ENCODE measurements at regions of chr5 and their contacts with region 1.

Region 1: DNA sequence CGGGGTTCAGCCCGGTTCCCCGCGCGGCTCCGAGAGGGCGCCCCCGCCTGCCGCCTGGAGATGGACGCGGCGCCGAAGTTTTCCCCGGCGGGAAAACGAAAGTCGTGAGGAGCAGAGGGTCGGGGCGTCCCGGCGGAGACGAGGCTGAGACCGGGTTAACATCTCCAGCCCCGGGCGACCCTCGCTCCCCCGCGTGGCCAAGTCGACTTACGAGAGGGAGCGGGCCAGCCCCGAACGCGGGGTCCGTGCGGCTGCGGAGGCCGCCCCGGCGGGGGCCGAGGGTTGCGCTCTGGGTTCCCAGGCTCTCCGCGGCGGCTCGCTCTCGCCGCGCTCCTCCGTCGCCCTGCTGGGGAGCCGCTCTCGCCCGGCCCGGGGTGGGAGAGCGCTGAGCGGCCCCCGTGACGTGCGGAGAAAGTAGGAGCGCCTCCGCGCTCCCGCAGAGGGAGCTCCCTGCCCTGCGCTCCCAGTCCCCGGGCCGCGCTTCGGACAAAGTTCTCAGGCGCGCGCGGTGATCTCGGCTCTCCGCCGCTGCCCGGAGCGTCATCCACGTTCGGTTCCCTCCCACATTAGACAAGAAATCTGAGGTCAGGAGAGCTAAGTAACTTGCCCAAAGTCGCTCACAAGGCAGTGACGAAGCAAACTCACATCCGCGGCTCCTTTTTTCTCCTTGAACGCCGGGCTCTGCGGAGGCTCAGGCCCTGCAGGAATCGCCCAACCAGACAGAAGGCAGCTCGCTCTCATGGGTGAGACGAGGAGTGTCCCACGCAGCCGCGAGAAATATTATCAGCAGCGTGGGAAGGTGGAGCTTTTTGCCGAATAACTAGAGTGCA is 1.2 kb upstream of the GCNT4 start:
- DNase-seq: peak; percentile 43 to 83 (median 59)
- ATAC-seq: peak; percentile 45
- H3K4me3 ChIP-seq: peak overlapping the region; percentile 68
- H3K4me3 Mint-ChIP-seq: peak overlapping the region; percentile 95
- H3K27ac ChIP-seq: peak overlapping the region; percentile 69 to 89
- H3K27ac Mint-ChIP-seq: peak overlapping the region; percentile 94
- H3K4me1 ChIP-seq: peaks cover 75% of the 10 kb centered on the region
- H3K4me1 Mint-ChIP-seq: peaks cover 85% of the 10 kb centered on the region
- H3K27me3 ChIP-seq: no peaks in the 10 kb centered on the region
- H3K27me3 Mint-ChIP-seq: no peaks in the 10 kb centered on the region
- CTCF ChIP-seq: no peak

Region 2: DNA sequence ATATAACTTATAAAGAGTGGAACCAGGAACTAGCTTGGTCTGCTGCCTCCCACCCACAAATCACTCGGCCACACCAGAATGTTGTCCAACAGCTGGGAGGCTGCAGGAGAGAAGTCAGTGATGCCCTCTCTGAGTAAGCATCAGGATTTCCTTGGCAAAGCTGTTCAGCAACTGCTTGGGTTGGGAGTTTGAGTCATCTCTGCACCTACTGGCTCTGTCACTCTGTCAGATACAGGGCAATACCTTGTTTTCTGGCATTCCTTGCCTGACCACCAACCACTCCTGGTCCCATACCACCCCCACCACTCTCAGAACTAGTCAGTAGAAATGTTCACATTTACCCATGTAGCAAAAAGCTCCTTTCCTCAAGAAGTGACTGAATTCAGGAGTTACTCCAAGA is 35.6 kb after region 1 on chr5:
- CTCF ChIA-PET with region 1: interaction called, 5 read pairs
- POLR2A ChIA-PET with region 1: interaction called, 4 read pairs
- intact Hi-C with region 1: loop called (anchors 5 kb)
- DNase-seq: no peak
- ATAC-seq: no peak
- H3K4me3 ChIP-seq: no peak overlapping the region
- H3K4me3 Mint-ChIP-seq: no peak overlapping the region
- H3K27ac ChIP-seq: no peak overlapping the region
- H3K27ac Mint-ChIP-seq: no peak overlapping the region
- H3K4me1 ChIP-seq: peaks cover 7% of the 10 kb centered on the region
- H3K4me1 Mint-ChIP-seq: peaks cover 44% of the 10 kb centered on the region
- H3K27me3 ChIP-seq: no peaks in the 10 kb centered on the region
- H3K27me3 Mint-ChIP-seq: no peaks in the 10 kb centered on the region
- CTCF ChIP-seq: no peak

Region 3: GRCh38 chr5:75236322-75237316 is 183.1 kb after region 1 on chr5 and contains the start of gene ANKRD31:
- CTCF ChIA-PET with region 1: interaction called, 14 read pairs
- POLR2A ChIA-PET with region 1: interaction called, 182 read pairs
- intact Hi-C with region 1: loop called (anchors 1 to 2 kb)
- DNase-seq: peak; percentile 80 to 97 (median 90)
- ATAC-seq: peak; percentile 98
- H3K4me3 ChIP-seq: peak within 1 kb of the TSS; percentile 76
- H3K4me3 Mint-ChIP-seq: peak within 1 kb of the TSS; percentile 96
- H3K27ac ChIP-seq: peak within 1 kb of the TSS; percentile 58 to 79
- H3K27ac Mint-ChIP-seq: peak within 1 kb of the TSS; percentile 94
- H3K4me1 ChIP-seq: peaks cover 13% of the 10 kb centered on the region
- H3K4me1 Mint-ChIP-seq: peaks cover 19% of the 10 kb centered on the region
- H3K27me3 ChIP-seq: no peaks in the 10 kb centered on the region
- H3K27me3 Mint-ChIP-seq: no peaks in the 10 kb centered on the region
- CTCF ChIP-seq: peak; percentile 80
- total RNA-seq, gene ANKRD31: 0.55 to 0.56 TPM

Region 4: GRCh38 chr5:75336625-75337339 is 283.3 kb after region 1 on chr5 and contains the start of gene HMGCR:
- CTCF ChIA-PET with region 1: no interaction called
- POLR2A ChIA-PET with region 1: interaction called, 13 read pairs
- intact Hi-C with region 1: loop called (anchors 2 to 5 kb)
- DNase-seq: peak; percentile 91 to 99 (median 95)
- ATAC-seq: peak; percentile 90
- H3K4me3 ChIP-seq: peak within 1 kb of the TSS; percentile 82
- H3K4me3 Mint-ChIP-seq: no peak within 1 kb of the TSS
- H3K27ac ChIP-seq: peak within 1 kb of the TSS; percentile 64 to 88
- H3K27ac Mint-ChIP-seq: no peak within 1 kb of the TSS
- H3K4me1 ChIP-seq: peaks cover 5% of the 10 kb centered on the region
- H3K4me1 Mint-ChIP-seq: peaks cover 38% of the 10 kb centered on the region
- H3K27me3 ChIP-seq: no peaks in the 10 kb centered on the region
- H3K27me3 Mint-ChIP-seq: no peaks in the 10 kb centered on the region
- CTCF ChIP-seq: no peak
- total RNA-seq, gene HMGCR: 55.5 to 61.5 TPM

Region 5: GRCh38 chr5:75603371-75603770 is 549.9 kb after region 1 on chr5:
- CTCF ChIA-PET with region 1: no interaction called
- POLR2A ChIA-PET with region 1: no interaction called
- intact Hi-C with region 1: no loop called
- DNase-seq: no peak
- ATAC-seq: no peak
- H3K4me3 ChIP-seq: no peak overlapping the region
- H3K4me3 Mint-ChIP-seq: no peak overlapping the region
- H3K27ac ChIP-seq: no peak overlapping the region
- H3K27ac Mint-ChIP-seq: no peak overlapping the region
- H3K4me1 ChIP-seq: no peaks in the 10 kb centered on the region
- H3K4me1 Mint-ChIP-seq: peaks cover 14% of the 10 kb centered on the region
- H3K27me3 ChIP-seq: no peaks in the 10 kb centered on the region
- H3K27me3 Mint-ChIP-seq: no peaks in the 10 kb centered on the region
- CTCF ChIP-seq: no peak

Region 6: DNA sequence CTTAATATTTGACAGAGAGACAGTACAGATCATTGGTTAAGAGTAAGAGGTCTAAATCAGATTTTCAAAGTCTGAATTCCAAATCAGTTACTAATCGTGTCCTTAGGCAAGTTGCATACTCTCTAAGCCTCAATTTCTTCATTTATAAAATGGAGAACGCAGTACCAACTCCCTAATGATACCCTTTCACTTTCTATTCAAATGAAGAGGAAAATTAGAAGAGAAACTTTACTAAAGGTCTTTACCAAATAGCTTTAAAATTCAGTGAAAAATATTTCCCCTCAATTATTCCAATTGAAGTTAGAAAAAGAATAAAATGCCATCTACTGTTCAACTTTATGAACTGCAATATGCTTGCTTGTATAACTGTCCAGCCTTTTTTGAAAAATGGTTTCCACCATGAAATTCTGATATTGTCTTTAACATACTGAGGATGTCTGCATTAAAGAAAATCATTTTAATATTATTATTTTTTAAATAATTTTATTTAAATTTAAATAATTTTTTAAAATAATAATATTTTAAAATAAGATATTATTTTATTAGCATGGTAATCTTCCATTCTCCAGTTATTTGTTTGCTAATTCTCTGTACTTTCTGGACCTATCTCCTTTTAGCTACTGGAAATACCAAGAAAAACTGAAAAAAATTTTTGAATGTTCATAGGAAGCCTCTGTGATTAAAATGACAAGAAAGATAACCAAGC is 627.8 kb after region 1 on chr5:
- CTCF ChIA-PET with region 1: no interaction called
- POLR2A ChIA-PET with region 1: no interaction called
- intact Hi-C with region 1: loop called in 1 of 2 experiments (anchors 10 kb)
- DNase-seq: peak in 3 of 14 experiments; percentile 58 to 61 (median 59)
- ATAC-seq: peak; percentile 38
- H3K4me3 ChIP-seq: no peak overlapping the region
- H3K4me3 Mint-ChIP-seq: no peak overlapping the region
- H3K27ac ChIP-seq: no peak overlapping the region
- H3K27ac Mint-ChIP-seq: no peak overlapping the region
- H3K4me1 ChIP-seq: no peaks in the 10 kb centered on the region
- H3K4me1 Mint-ChIP-seq: peaks cover 11% of the 10 kb centered on the region
- H3K27me3 ChIP-seq: no peaks in the 10 kb centered on the region
- H3K27me3 Mint-ChIP-seq: no peaks in the 10 kb centered on the region
- CTCF ChIP-seq: peak; percentile 82